ENCODE measurements at regions of chr7 and their contacts with region 1.

Region 1: GRCh38 chr7:130084037-130084875 is 13.9 kb downstream of the KLHDC10 start:
- DNase-seq: no peak
- H3K4me3 Mint-ChIP-seq: no peak overlapping the region
- H3K27ac Mint-ChIP-seq: no peak overlapping the region
- H3K4me1 Mint-ChIP-seq: no peaks in the 10 kb centered on the region
- H3K27me3 Mint-ChIP-seq: no peaks in the 10 kb centered on the region

Region 2: DNA sequence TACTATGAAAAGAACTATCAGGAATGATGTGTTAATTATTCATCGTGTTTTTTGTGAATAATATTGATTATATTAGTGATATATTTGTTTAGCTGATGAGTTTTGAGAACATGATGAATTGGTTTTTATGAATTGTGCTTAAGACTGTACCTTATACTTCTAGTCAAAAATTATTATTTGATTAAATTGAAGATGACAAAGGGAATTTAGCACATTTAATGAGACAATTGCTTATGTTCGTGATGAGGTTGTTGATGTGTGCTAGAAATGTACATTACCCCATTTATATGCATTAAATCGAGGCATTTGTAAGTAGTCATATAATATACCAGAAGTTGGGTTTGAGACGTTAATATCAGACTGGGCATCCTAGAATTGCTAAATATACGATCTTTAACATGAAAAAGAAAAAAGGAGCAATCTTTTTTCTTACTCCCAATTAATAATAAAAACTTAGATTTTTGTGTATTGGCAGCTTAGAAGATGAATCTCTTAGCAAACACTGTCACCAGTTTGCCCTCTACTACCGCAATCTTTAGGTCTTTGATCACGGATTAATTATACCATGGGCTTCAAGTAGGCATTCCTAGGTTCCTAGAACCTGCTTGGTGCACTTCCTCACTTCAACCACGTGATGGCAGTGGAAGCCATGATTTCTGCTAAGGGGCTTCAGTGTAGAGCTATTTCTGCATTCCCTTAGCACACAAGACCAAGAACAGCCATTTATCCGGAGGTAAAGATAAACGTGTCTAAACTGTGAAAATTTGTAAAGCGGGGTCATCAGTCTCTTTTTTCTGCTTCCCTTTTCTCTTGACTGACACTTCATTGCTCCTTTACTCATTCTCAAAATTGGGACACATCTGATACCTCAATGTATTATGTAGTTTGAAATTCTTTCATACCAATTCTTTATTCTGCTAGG is 12.3 kb before region 1 on chr7:
- CTCF ChIA-PET with region 1: interaction called, 17 read pairs
- DNase-seq: peak; percentile 65
- H3K4me3 Mint-ChIP-seq: peak overlapping the region; percentile 94
- H3K27ac Mint-ChIP-seq: no peak overlapping the region
- H3K4me1 Mint-ChIP-seq: peaks cover 35% of the 10 kb centered on the region
- H3K27me3 Mint-ChIP-seq: no peaks in the 10 kb centered on the region

Measured in activated naive CD4-positive, alpha-beta T cell treated with anti-CD3 and anti-CD28 coated beads, Interleukin-2, amount 10 ng/mL, durations not matched to agents 7 days and 5 days (primary cell).